Activated CD8-positive, alpha-beta T cell treated with anti-CD3 and anti-CD28 coated beads for 36 hours (primary cell): ENCODE measurements at regions of chr5 and their contacts with region 1.

Region 1: DNA sequence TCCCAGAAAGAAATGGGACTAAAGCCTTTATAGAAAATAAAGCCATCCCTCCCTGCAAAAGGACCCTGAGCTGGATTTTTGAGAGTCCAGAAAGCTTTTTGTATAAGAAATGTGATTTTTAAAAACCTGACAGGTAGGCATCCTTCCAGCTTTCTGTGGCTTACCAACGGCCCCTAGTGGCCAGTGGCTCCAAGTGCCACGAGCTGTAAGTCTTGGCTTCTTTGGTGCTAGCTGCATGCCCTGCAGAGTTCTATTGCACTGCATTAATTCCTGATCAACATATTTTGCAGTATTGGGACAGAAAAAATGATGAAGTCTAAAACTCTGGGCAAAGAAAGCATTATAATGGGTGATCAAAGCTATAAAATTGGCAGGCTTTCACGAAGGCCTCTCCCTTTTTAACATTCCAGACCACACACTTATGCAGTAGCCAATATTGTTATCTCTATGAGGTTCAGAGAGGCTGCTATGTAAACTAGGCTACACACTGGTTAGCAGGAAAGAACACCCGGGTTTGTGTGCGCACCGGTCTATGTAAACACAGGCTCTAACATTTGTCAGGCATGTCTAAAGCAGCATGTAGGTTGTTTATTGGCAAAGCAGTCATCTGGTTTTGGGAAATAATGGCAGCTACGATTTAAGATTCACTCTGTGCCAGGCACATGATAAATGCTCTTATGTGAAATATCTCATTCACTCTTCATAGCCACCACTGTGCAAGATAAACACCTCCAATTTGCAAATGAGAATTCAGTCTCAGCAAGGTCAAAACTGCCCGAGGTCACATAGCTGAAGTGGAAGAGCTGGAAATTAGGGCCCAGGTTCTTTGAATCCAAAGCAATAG is 55.2 kb downstream of the NMUR2 start:
- DNase-seq: peak; percentile 49
- ATAC-seq: no peak
- H3K4me3 Mint-ChIP-seq: no peak overlapping the region
- H3K27ac Mint-ChIP-seq: no peak overlapping the region
- H3K4me1 Mint-ChIP-seq: no peaks in the 10 kb centered on the region
- H3K27me3 Mint-ChIP-seq: peaks cover 2% of the 10 kb centered on the region
- CTCF ChIP-seq: peak; percentile 74

Region 2: GRCh38 chr5:152142840-152143469 is 206.9 kb before region 1 on chr5:
- CTCF ChIA-PET with region 1: interaction called, 10 read pairs
- POLR2A ChIA-PET with region 1: no interaction called
- intact Hi-C with region 1: no loop called
- DNase-seq: peak; percentile 72
- ATAC-seq: peak; percentile 79
- H3K4me3 Mint-ChIP-seq: no peak overlapping the region
- H3K27ac Mint-ChIP-seq: no peak overlapping the region
- H3K4me1 Mint-ChIP-seq: no peaks in the 10 kb centered on the region
- H3K27me3 Mint-ChIP-seq: peaks cover 4% of the 10 kb centered on the region
- CTCF ChIP-seq: peak; percentile 87

Region 3: GRCh38 chr5:152221721-152222629 is 127.9 kb before region 1 on chr5:
- CTCF ChIA-PET with region 1: no interaction called
- POLR2A ChIA-PET with region 1: no interaction called
- intact Hi-C with region 1: no loop called
- DNase-seq: no peak
- ATAC-seq: no peak
- H3K4me3 Mint-ChIP-seq: no peak overlapping the region
- H3K27ac Mint-ChIP-seq: no peak overlapping the region
- H3K4me1 Mint-ChIP-seq: no peaks in the 10 kb centered on the region
- H3K27me3 Mint-ChIP-seq: peaks cover 3% of the 10 kb centered on the region
- CTCF ChIP-seq: no peak

Region 4: DNA sequence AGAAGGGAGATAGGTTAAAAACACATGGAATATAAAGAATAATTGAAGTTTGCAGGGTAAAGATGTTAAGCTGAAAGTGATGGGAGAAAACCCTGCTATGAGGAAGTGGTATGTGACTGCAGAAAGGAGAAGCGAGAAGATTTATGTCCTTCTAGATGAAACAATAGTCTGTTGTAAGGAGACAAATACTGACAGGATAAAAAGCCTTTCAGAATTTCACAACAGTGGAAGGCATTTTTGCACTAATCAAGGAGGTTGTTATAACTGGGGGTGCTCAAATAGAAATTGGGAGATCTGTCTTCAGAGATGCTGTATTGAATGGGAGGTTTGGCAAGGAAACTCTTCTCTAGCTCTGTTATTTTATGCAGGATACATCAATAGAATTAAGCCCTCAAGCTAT is 14.4 kb before region 1 on chr5:
- CTCF ChIA-PET with region 1: interaction called, 10 read pairs
- POLR2A ChIA-PET with region 1: no interaction called
- intact Hi-C with region 1: no loop called
- DNase-seq: no peak
- ATAC-seq: no peak
- H3K4me3 Mint-ChIP-seq: no peak overlapping the region
- H3K27ac Mint-ChIP-seq: no peak overlapping the region
- H3K4me1 Mint-ChIP-seq: no peaks in the 10 kb centered on the region
- H3K27me3 Mint-ChIP-seq: peaks cover 5% of the 10 kb centered on the region
- CTCF ChIP-seq: no peak

Region 5: GRCh38 chr5:152649609-152650008 is 299.7 kb after region 1 on chr5:
- CTCF ChIA-PET with region 1: no interaction called
- POLR2A ChIA-PET with region 1: no interaction called
- intact Hi-C with region 1: no loop called
- DNase-seq: no peak
- ATAC-seq: no peak
- H3K4me3 Mint-ChIP-seq: no peak overlapping the region
- H3K27ac Mint-ChIP-seq: no peak overlapping the region
- H3K4me1 Mint-ChIP-seq: no peaks in the 10 kb centered on the region
- H3K27me3 Mint-ChIP-seq: no peaks in the 10 kb centered on the region
- CTCF ChIP-seq: no peak